ENCODE measurements at regions of chr17 and their contacts with region 1.

Region 1: DNA sequence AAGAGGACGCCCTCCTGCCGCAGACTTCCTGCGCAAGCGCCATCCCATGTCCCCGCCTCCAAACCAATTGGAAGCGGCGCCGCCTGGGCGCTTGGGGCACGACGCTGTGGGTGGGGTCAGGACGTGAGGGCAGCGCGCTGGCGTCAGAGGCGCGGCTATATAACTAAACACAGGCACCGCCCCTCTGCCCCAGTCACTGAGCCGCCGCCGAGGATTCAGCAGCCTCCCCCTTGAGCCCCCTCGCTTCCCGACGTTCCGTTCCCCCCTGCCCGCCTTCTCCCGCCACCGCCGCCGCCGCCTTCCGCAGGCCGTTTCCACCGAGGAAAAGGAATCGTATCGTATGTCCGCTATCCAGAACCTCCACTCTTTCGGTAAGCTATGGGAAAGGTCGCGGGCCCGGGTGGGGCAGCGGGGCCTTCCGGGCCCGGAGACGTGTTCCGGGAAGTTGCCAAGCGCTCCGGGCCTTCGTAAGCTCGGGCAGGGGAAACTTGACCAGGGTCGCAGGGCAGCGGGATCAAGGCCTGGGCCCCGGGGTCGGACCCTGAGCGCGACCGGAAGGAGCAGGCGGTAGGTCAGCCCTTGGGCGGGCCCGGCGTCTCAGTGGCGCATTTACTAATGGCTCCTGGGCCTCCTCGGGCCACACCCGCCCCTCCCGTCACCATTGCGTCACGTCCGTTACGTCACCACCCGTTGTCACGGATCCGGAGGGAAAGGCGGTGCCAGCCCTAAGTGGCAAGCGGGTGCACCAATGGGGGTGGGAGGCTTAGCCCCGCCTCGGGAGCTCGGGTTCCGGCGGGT is at the start of gene EIF1:
- DNase-seq: peak; percentile 99
- H3K4me3 ChIP-seq: peak within 1 kb of the TSS; percentile 99
- H3K27ac ChIP-seq: peak within 1 kb of the TSS; percentile 100
- H3K27me3 ChIP-seq: peaks cover 4% of the 10 kb centered on the region
- CTCF ChIP-seq: no peak
- polyA plus RNA-seq, gene EIF1: 529 and 549 TPM in 2 replicates

Region 2: GRCh38 chr17:40542558-40543411 is 1146.1 kb before region 1 on chr17:
- CTCF ChIA-PET with region 1: no interaction called
- POLR2A ChIA-PET with region 1: interaction called, 14 read pairs
- DNase-seq: peak; percentile 92
- H3K4me3 ChIP-seq: no peak overlapping the region
- H3K27ac ChIP-seq: peak overlapping the region; percentile 99
- H3K27me3 ChIP-seq: no peaks in the 10 kb centered on the region
- CTCF ChIP-seq: no peak

Region 3: GRCh38 chr17:40818733-40819527 is 870.0 kb before region 1 on chr17:
- CTCF ChIA-PET with region 1: no interaction called
- POLR2A ChIA-PET with region 1: interaction called, 10 read pairs
- DNase-seq: peak; percentile 30
- H3K4me3 ChIP-seq: peak overlapping the region; percentile 73
- H3K27ac ChIP-seq: peak overlapping the region; percentile 80
- H3K27me3 ChIP-seq: no peaks in the 10 kb centered on the region
- CTCF ChIP-seq: no peak

Region 4: GRCh38 chr17:41654133-41654907 is 34.6 kb before region 1 on chr17:
- CTCF ChIA-PET with region 1: no interaction called
- POLR2A ChIA-PET with region 1: no interaction called
- DNase-seq: no peak
- H3K4me3 ChIP-seq: no peak overlapping the region
- H3K27ac ChIP-seq: no peak overlapping the region
- H3K27me3 ChIP-seq: peaks cover 4% of the 10 kb centered on the region
- CTCF ChIP-seq: no peak

Region 5: DNA sequence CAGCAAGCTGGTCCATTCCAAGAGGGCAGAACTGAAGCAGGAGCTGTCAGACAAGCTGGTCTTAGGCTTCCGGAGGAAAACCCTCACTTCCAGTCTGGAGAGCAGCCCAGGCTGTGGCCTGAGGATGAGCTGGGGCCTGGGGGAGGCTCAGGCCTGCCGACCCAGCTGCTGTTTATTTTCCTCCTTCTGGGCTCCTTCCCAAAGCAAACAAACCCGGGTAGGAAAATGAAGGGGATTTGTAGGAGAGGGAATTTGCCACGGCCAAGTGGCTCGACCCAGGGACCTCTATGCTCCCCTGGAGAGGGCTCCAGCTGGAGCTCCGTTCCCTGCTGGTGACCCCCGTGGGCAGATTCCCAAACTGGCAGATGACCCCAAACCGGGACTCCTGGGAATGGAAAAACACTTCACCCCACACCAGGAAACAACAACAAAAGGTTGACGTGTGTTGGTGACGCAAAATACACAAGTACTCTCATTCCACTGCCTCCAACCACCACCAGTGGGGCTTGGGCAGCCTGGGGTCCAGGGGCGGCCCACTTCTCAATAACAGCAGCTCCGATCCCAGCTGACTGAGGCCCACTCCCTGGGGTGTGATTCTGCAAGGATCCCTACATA is 88.8 kb after region 1 on chr17:
- CTCF ChIA-PET with region 1: no interaction called
- POLR2A ChIA-PET with region 1: interaction called, 10 read pairs
- DNase-seq: peak; percentile 90
- H3K4me3 ChIP-seq: 0 out of 2 replicates have a peak overlapping the region, but pooled peaks have one; percentile 7
- H3K27ac ChIP-seq: peak overlapping the region; percentile 96
- H3K27me3 ChIP-seq: no peaks in the 10 kb centered on the region
- CTCF ChIP-seq: 0 out of 2 replicates have a peak, but pooled peaks have one; percentile 14

Region 6: GRCh38 chr17:41930009-41930832 is 241.3 kb after region 1 on chr17 and contains the start of gene ODAD4:
- CTCF ChIA-PET with region 1: no interaction called
- POLR2A ChIA-PET with region 1: interaction called, 10 read pairs
- DNase-seq: peak; percentile 94
- H3K4me3 ChIP-seq: peak within 1 kb of the TSS; percentile 72
- H3K27ac ChIP-seq: peak within 1 kb of the TSS; percentile 83
- H3K27me3 ChIP-seq: no peaks in the 10 kb centered on the region
- CTCF ChIP-seq: peak; percentile 60
- polyA plus RNA-seq, gene ODAD4: 0.47 and 0.56 TPM in 2 replicates